Activated T-helper 1 cell treated with anti-CD3 and anti-CD28 coated beads, Interleukin-12 subunit alpha, Interleukin-12 subunit beta, Interleukin-2, Interleukin-4 antibody, amounts not matched to agents 30 ng/mL and 10 ng/mL and 1 ng/mL, durations not matched to agents 14 hours and 24 hours and 36 hours (primary cell): ENCODE measurements at regions of chr14 and their contacts with region 1.

Region 1: GRCh38 chr14:102139248-102140026 is at the start of gene WDR20:
- DNase-seq: peak; percentile 99
- H3K4me3 Mint-ChIP-seq: peak within 1 kb of the TSS; percentile 94
- H3K27ac Mint-ChIP-seq: peak within 1 kb of the TSS; percentile 91
- H3K4me1 Mint-ChIP-seq: peaks cover 19% of the 10 kb centered on the region
- H3K27me3 Mint-ChIP-seq: no peaks in the 10 kb centered on the region
- total RNA-seq, gene WDR20: 33.9 and 34.2 TPM in 2 replicates

Region 2: DNA sequence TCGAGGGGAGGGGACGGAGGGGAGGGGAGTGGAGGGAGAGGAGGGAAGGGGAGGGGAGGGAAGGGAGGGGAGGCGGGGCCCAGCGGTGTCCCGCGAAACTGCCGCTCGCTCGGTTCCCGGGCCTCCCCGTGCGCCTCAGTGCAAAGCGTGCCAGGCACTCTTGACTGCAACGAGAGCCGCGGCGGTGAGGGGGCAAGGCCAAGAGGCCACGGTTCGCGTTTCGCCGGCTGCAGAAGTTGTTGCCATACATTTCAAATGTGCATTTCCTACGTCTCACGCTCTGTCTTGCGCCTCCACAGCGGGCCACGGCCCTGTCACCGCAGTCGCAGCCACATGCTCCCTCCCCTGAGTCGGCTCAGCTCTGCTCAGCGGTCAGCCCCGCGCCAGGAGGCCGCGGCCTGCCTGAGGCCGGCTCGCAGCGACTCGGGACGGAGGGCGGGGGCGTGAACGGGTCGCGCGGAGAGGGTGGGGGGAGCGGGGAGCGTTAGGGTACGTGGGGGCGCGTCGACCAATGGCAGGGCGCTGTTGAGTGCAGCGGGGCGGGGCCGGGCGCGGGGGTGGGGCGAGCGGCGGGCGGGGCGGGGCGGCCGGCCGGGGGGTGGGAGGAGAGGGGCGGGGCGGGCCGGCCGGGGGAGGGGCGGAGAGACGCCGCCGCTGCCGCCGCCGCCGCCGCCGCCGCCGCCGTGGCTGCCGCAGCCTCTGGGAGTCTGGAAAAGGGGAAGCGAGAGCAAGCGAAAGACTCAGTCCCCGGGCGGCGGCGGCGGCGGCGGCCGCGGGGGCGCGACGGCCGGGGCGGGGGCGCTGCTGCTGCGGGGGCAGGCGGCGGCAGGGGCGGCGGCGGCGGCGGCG is 378.2 kb before region 1 on chr14 and contains the start of gene PPP2R5C:
- intact Hi-C with region 1: loop called (anchors 1 kb)
- DNase-seq: peak; percentile 72
- H3K4me3 Mint-ChIP-seq: peak within 1 kb of the TSS; percentile 90
- H3K27ac Mint-ChIP-seq: peak within 1 kb of the TSS; percentile 79
- H3K4me1 Mint-ChIP-seq: peaks cover 33% of the 10 kb centered on the region
- H3K27me3 Mint-ChIP-seq: peaks cover 3% of the 10 kb centered on the region
- total RNA-seq, gene PPP2R5C: 157 and 166 TPM in 2 replicates

Region 3: GRCh38 chr14:102020058-102020971 is 119.1 kb before region 1 on chr14:
- intact Hi-C with region 1: loop called (anchors 1 kb)
- DNase-seq: peak; percentile 38
- H3K4me3 Mint-ChIP-seq: peak overlapping the region; percentile 32
- H3K27ac Mint-ChIP-seq: peak overlapping the region; percentile 76
- H3K4me1 Mint-ChIP-seq: peaks cover 20% of the 10 kb centered on the region
- H3K27me3 Mint-ChIP-seq: no peaks in the 10 kb centered on the region

Region 4: GRCh38 chr14:102086972-102087761 is 52.3 kb before region 1 on chr14 and contains the start of gene HSP90AA1:
- intact Hi-C with region 1: loop called (anchors 1 kb)
- DNase-seq: peak; percentile 94
- H3K4me3 Mint-ChIP-seq: peak within 1 kb of the TSS; percentile 99
- H3K27ac Mint-ChIP-seq: peak within 1 kb of the TSS; percentile 97
- H3K4me1 Mint-ChIP-seq: peaks cover 63% of the 10 kb centered on the region
- H3K27me3 Mint-ChIP-seq: no peaks in the 10 kb centered on the region
- total RNA-seq, gene HSP90AA1: 993 and 995 TPM in 2 replicates

Region 5: DNA sequence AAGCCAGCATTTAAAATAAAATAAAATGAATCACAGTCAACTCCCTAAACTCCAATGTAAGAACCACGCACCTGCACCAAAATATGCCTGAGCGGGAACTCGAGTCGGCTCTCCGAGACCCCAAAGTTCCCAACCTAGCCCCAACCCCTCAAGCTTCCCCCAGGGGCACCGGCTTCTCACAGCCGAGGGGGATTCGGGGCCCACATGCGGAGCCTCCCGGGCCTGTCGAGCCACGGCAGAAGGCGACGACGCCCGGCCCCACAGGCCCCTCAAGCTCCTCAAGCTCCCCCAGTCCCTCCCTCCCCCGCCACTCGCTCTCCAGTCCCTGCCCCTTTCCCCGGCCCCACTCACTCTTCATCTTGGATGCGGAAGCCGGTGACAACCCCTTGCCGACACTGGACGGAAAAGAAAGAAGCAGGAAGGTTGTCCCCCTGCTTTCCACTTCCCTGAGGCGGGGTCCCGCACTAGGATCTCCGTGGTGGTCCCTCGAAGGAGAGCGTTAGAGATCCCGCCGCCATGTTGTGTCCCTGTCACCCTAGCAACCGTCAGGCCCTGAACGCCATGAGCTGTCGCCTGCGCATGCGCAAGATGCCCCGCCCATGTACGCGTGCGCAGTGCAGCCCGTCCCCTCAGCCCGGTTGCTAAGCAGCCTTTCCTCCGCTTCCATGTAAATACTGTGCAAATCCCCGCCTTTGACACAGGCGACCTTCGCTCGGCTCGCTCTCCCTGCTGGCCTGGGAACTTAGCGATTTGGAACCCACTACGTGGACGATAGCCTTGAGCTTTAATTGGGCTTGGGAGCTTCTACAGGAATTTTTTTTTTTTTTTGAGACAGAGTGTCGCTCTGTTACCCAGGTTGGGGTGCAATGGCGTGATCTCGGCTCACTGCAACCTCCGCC is 165.4 kb after region 1 on chr14 and contains the start of gene MOK:
- intact Hi-C with region 1: loop called (anchors 1 kb)
- DNase-seq: peak; percentile 98
- H3K4me3 Mint-ChIP-seq: peak within 1 kb of the TSS; percentile 96
- H3K27ac Mint-ChIP-seq: peak within 1 kb of the TSS; percentile 87
- H3K4me1 Mint-ChIP-seq: peaks cover 12% of the 10 kb centered on the region
- H3K27me3 Mint-ChIP-seq: peaks cover 10% of the 10 kb centered on the region
- total RNA-seq, gene MOK: 6.0 and 7.0 TPM in 2 replicates

Region 6: GRCh38 chr14:103562429-103563225 is 1423.2 kb after region 1 on chr14 and contains the starts of genes BAG5 and COA8:
- intact Hi-C with region 1: loop called (anchors 2 kb)
- DNase-seq: peak; percentile 83
- H3K4me3 Mint-ChIP-seq: peak within 1 kb of the TSS; percentile 96
- H3K27ac Mint-ChIP-seq: peak within 1 kb of the TSS; percentile 94
- H3K4me1 Mint-ChIP-seq: peaks cover 29% of the 10 kb centered on the region
- H3K27me3 Mint-ChIP-seq: no peaks in the 10 kb centered on the region
- total RNA-seq, gene BAG5: 33.8 and 34.1 TPM in 2 replicates
- total RNA-seq, gene COA8: 37.2 and 39.7 TPM in 2 replicates